Activated CD4-positive, alpha-beta T cell treated with anti-CD3 and anti-CD28 coated beads for 36 hours (primary cell): ENCODE measurements at regions of chr1 and their contacts with region 1.

Region 1: DNA sequence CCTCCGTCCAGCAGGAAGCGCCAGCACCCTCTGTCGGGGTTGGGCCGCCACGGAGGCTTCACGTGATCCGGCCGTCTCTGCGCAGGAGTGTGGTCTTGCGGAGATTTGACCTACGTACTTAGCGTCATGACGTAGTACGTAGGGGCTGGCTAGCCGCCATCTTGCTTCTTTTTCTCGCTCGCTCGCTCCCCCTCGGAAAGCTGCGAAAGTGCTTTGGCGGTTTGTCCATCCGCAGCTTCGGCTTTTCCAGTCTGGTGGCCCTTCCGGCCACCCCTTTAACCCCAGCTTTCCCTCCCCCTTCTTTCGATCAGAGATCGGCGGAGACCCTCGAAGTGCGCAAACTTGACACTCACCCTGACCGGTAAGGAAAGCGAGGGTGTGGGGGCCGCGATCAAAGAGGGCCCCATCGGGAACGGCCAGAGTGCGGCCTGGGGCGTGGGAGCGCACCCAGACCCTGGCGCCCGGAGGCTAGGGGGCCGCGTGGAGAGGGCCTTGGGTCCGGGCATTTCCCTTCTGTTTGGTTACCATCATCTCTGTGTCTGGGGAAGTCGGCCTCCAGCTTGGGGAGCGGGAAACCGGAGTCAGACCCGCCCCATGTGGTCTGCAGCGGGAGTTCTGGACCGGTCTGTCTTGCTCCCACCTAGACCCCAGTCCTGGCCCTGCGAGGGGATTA is at the start of gene PRRC2C:
- DNase-seq: peak; percentile 97
- ATAC-seq: peak; percentile 90
- H3K4me3 Mint-ChIP-seq: peak within 1 kb of the TSS; percentile 82
- H3K27ac Mint-ChIP-seq: peak within 1 kb of the TSS; percentile 95
- H3K4me1 Mint-ChIP-seq: peaks cover 43% of the 10 kb centered on the region
- H3K27me3 Mint-ChIP-seq: no peaks in the 10 kb centered on the region
- total RNA-seq, gene PRRC2C: 233 to 351 TPM

Region 2: GRCh38 chr1:171434717-171435346 is 50.7 kb before region 1 on chr1:
- CTCF ChIA-PET with region 1: no interaction called
- POLR2A ChIA-PET with region 1: no interaction called
- intact Hi-C with region 1: loop called in 1 of 2 experiments (anchors 2 kb)
- DNase-seq: peak; percentile 21
- ATAC-seq: peak; percentile 82
- H3K4me3 Mint-ChIP-seq: peak overlapping the region; percentile 0
- H3K27ac Mint-ChIP-seq: peak overlapping the region; percentile 81
- H3K4me1 Mint-ChIP-seq: peaks cover 14% of the 10 kb centered on the region
- H3K27me3 Mint-ChIP-seq: no peaks in the 10 kb centered on the region

Region 3: DNA sequence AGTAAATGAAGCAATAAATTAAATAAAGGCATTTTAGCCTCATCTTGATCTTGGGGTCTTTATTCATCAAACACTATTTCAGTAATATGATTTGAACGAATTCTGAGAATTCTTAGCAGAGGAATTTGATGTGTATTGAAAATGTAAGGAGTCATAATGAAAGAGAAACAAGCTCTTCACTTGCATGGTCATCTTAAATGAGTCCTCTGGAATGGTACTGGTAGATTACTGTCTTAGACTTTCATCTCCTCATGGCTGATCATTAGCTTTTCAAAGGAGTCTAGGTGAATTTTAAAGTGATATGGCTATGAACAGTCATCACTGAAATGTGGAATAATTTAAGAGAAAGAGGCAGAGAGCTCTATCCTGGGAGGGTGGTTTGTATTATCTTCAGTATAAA is 29.8 kb after region 1 on chr1:
- CTCF ChIA-PET with region 1: interaction called, 8 read pairs
- POLR2A ChIA-PET with region 1: interaction called, 3 read pairs
- intact Hi-C with region 1: loop called (anchors 1 to 5 kb)
- DNase-seq: no peak
- ATAC-seq: peak; percentile 65
- H3K4me3 Mint-ChIP-seq: no peak overlapping the region
- H3K27ac Mint-ChIP-seq: peak overlapping the region; percentile 73
- H3K4me1 Mint-ChIP-seq: peaks cover 42% of the 10 kb centered on the region
- H3K27me3 Mint-ChIP-seq: no peaks in the 10 kb centered on the region

Region 4: GRCh38 chr1:171583581-171584201 is 98.2 kb after region 1 on chr1:
- CTCF ChIA-PET with region 1: interaction called, 5 read pairs
- POLR2A ChIA-PET with region 1: no interaction called
- intact Hi-C with region 1: loop called in 1 of 2 experiments (anchors 5 kb)
- DNase-seq: no peak
- ATAC-seq: no peak
- H3K4me3 Mint-ChIP-seq: no peak overlapping the region
- H3K27ac Mint-ChIP-seq: peak overlapping the region; percentile 28
- H3K4me1 Mint-ChIP-seq: peaks cover 18% of the 10 kb centered on the region
- H3K27me3 Mint-ChIP-seq: no peaks in the 10 kb centered on the region

Region 5: DNA sequence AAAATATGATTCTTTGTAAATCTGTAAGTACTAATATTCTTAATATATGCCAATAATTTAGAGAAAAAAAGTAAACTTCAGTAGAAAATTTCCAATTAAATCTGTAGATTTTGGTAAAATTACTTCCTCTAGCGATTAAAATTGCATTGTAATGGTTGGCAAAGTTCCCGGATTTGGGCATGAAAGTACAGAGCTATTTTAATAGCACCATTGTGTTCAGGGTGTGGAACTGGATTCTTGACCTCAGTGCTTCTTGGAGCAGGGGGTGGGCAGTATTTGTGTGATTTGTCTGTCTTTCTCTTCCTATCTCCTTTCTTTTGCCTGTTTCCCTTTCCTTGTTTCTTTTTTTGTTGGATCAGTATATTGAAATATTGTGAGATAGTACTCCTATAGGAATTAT is 427.9 kb after region 1 on chr1:
- CTCF ChIA-PET with region 1: no interaction called
- POLR2A ChIA-PET with region 1: no interaction called
- intact Hi-C with region 1: no loop called
- DNase-seq: no peak
- ATAC-seq: no peak
- H3K4me3 Mint-ChIP-seq: no peak overlapping the region
- H3K27ac Mint-ChIP-seq: no peak overlapping the region
- H3K4me1 Mint-ChIP-seq: peaks cover 1% of the 10 kb centered on the region
- H3K27me3 Mint-ChIP-seq: no peaks in the 10 kb centered on the region

Region 6: DNA sequence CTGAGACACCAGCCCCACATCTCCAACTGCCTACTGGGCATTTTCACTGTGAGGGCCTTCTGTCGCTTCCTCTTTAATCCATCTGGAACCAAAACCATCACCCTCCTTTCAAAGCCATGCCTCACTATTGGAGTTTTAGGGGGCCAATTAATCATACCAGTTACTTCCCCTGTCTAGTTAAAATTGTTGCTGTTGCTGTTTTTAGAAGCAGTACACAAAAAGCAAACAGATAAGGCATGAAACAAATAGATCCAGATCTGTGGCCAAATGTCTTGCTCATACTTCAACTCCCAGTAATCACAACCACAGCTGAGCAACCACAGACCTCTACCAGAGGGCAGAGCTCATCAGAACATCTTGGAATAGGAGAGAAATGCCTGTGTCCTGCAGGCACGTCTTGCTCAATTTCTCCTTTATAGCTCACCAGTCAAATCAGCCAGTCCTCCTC is 801.1 kb after region 1 on chr1:
- CTCF ChIA-PET with region 1: no interaction called
- POLR2A ChIA-PET with region 1: no interaction called
- intact Hi-C with region 1: no loop called
- DNase-seq: no peak
- ATAC-seq: no peak
- H3K4me3 Mint-ChIP-seq: no peak overlapping the region
- H3K27ac Mint-ChIP-seq: no peak overlapping the region
- H3K4me1 Mint-ChIP-seq: no peaks in the 10 kb centered on the region
- H3K27me3 Mint-ChIP-seq: no peaks in the 10 kb centered on the region